Ascending aorta (tissue), 2 donors: ENCODE measurements at regions of chr12 and their contacts with region 1.

Region 1: DNA sequence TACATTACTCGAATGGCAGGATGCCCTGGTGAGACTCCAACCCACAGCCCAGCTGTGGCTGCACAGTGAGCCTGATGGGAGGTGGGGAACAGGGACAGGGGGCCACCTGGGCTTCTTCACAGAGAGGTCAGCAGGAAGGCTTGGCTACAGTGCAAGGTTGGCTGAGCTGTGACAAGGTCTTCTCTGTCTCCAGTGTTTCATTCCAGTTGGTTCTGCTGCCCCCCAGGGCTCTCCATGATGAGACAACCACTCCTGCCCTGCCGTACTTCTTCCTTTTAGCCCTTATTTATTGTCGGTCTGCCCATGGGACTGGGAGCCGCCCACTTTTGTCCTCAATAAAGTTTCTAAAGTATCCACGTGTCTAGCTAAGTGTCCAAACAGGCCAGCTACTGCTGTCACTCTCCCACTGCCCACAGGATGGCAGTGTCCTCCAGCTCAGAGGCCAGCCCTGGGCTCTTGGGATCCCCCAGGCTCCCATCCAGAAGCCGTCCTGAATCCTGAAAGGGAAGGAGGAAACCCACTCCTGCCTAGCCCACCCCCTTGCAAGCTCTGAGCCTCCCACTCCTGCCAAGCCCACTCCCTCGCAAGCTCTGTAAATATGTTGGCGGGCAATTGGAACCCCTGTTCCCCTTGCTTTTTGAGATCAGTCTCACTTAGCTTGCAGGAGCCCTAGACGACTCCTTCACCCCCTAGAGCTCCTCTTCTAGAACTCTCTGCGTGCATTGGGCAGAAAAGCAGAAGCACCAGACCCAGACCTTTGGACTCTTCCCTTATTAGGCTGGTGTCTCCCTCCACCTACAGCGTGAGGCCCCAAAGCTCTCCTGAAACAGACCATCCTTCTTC is 5.4 kb downstream of the C1QL4 start:
- DNase-seq: peak in 1 of 2 donors; percentile 73
- H3K4me3 ChIP-seq: no peak overlapping the region
- H3K27ac ChIP-seq: no peak overlapping the region
- H3K4me1 ChIP-seq: no peaks in the 10 kb centered on the region
- H3K27me3 ChIP-seq: peaks cover 11% of the 10 kb centered on the region
- CTCF ChIP-seq: peak; percentile 60 to 73 (median 70)

Region 2: GRCh38 chr12:49347384-49348237 is 16.0 kb after region 1 on chr12:
- intact Hi-C with region 1: loop called (anchors 1 kb)
- DNase-seq: peak in 1 of 2 donors; percentile 78
- H3K4me3 ChIP-seq: peak overlapping the region; percentile 41 to 69
- H3K27ac ChIP-seq: no peak overlapping the region
- H3K4me1 ChIP-seq: peaks cover 30 to 48% of the 10 kb centered on the region in 2 donors
- H3K27me3 ChIP-seq: peaks cover 25% of the 10 kb centered on the region
- CTCF ChIP-seq: peak; percentile 85 to 93 (median 85)

Region 3: DNA sequence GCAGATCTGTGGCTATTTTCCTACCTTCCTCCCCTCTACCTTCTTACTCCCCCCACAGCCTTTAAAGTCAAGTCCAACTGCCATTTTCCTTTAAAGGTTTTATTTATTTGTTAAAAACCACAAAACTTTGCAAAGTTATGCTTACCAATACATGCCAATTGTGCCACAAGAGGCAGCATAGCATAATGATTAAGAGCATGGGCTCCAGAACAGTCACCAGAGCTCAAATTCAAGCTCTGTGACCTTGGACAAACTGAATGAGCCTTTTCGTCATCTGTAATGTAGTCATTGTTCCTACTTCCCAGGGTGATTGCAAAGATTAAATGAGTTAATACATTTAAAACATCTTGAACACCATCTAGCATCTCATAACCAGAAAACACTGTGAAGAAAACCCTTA is 388.6 kb after region 1 on chr12:
- intact Hi-C with region 1: no loop called
- DNase-seq: no peak
- H3K4me3 ChIP-seq: no peak overlapping the region
- H3K27ac ChIP-seq: no peak overlapping the region
- H3K4me1 ChIP-seq: no peaks in the 10 kb centered on the region
- H3K27me3 ChIP-seq: no peaks in the 10 kb centered on the region
- CTCF ChIP-seq: peak in 1 of 3 experiments; percentile 19